RWPE1 (cell line): ENCODE measurements at regions of chr2 and their contacts with region 1.

Region 1: GRCh38 chr2:73176881-73177644 is 25.3 kb upstream of the NOTO start:
- DNase-seq: peak; percentile 90
- H3K27ac ChIP-seq: no peak overlapping the region
- CTCF ChIP-seq: peak; percentile 98

Region 2: GRCh38 chr2:72887754-72888437 is 289.2 kb before region 1 on chr2:
- CTCF ChIA-PET with region 1: interaction called, 32 read pairs
- POLR2A ChIA-PET with region 1: no interaction called
- DNase-seq: peak; percentile 81
- H3K27ac ChIP-seq: peak overlapping the region; percentile 87
- CTCF ChIP-seq: peak; percentile 92

Region 3: GRCh38 chr2:72991980-72992733 is 184.9 kb before region 1 on chr2:
- CTCF ChIA-PET with region 1: interaction called, 16 read pairs
- POLR2A ChIA-PET with region 1: no interaction called
- DNase-seq: no peak
- H3K27ac ChIP-seq: no peak overlapping the region
- CTCF ChIP-seq: no peak

Region 4: DNA sequence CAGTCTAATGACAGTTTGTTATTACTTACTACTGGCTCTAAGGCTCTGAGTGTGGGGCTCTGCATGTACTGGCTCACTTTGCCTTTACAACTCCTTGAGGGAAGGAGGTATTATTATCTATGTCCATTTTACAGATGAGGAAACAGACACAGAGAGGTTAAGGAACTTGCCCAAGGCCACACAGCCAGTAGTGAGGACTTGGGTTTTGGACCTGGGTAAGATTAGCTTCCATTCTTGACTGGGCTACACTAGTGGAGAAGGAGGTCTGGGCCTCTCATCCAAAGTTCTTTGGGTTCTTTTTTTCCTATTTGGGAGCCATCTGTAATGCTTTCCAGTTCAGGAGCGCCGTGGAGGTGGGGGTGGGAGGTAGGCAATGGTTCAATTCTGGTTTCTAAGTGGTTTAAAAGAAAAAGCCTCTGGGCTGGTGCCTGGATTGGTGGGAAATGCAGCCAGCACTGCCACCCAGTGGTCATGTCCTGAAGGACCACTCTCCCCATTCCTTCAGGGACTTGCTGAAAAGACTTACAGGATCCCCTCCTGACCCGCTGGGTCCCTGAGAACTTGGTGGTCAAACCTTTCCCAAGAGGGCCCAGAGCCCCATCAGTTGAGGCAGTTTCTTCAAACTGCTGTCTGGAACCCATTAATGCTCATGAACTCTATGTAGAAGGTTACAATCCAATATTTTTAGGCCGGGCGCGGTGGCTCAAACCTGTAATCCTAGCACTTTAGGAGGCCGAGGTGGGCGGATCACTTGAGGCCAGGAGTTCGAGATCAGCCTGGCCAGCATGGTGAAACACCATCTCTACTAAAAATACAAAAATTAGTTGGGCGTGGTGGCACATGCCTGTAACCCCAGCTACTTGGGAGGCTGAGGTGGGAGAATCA is 13.3 kb before region 1 on chr2:
- CTCF ChIA-PET with region 1: interaction called, 14 read pairs
- POLR2A ChIA-PET with region 1: no interaction called
- DNase-seq: peak; percentile 86
- H3K27ac ChIP-seq: no peak overlapping the region
- CTCF ChIP-seq: peak; percentile 83

Region 5: GRCh38 chr2:73212448-73213176 is 35.5 kb after region 1 on chr2:
- CTCF ChIA-PET with region 1: interaction called, 15 read pairs
- POLR2A ChIA-PET with region 1: no interaction called
- DNase-seq: peak; percentile 81
- H3K27ac ChIP-seq: peak overlapping the region; percentile 70
- CTCF ChIP-seq: peak; percentile 89

Region 6: DNA sequence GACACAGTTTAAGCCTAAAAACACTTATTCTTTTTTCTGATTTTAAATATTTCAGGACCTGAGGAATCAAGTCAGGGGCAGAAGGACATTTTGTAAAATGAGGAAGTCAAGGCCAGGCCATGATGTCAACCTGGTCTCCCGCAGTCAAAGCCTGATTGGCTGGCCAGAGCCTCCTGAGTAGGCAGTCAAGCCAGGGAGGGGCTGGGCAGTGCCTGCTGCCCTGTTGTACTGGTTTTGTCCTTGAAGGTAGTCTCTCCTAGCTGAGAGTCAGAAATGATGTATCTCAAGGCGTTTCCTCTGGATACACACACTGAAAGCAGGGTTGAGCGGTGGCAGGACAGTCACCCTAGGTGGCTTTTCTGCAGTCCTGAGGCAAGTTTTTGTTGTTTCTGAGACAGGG is 76.8 kb after region 1 on chr2:
- CTCF ChIA-PET with region 1: no interaction called
- POLR2A ChIA-PET with region 1: no interaction called
- DNase-seq: no peak
- H3K27ac ChIP-seq: peak overlapping the region; percentile 65
- CTCF ChIP-seq: no peak

Region 7: DNA sequence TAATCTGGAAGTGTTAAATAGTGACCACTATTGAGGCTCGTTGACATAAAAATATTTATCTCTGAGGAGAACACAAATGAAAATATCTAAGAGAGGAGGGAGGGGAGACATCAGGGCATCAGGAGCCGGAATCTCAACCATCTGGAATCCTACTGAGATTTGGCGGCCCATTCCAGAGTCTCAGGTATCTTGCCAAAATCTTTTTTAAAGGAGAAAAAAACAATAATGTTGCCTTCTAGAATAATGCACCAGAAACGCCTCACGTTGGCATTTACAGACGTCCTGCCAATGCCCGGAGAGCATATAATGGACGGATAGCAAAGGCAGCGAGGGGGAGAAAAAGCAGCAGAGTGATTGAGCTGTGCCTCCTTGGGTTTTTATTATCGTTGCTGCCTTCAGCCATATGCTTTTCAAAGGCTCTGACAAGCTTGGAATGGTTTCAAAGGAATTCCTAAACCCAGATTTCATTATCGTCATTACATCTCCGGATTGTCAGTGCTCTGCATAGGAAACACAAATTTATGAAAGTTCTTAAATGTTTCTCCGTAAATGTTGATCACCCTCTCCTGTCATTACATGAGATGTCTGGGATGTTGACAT is 147.2 kb after region 1 on chr2:
- CTCF ChIA-PET with region 1: no interaction called
- POLR2A ChIA-PET with region 1: no interaction called
- DNase-seq: no peak
- H3K27ac ChIP-seq: no peak overlapping the region
- CTCF ChIP-seq: no peak